ENCODE measurements at regions of chr7 and their contacts with region 1.

Region 1: DNA sequence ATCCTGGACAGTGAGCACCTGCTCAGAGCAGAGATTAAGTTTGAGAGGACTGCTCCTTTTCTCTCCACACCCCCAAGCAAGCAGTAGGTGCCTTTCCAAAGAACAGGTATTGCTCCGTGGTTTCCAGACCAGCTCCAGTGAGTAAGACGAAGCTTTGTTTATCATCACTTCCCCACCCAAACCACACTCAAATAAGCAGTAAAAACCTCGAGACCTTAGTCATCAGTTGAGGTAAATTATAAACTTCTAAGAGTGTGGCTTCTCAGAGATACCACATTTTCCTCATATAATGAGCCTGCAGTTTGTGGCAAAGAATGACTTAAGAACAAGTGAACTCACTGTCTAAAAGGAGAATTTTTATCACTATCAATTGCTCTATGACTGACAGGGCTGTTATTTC is 50.0 kb upstream of the GRB10 start:
- DNase-seq: peak; percentile 44
- H3K4me3 Mint-ChIP-seq: no peak overlapping the region
- H3K27ac Mint-ChIP-seq: peak overlapping the region; percentile 8
- H3K4me1 Mint-ChIP-seq: peaks cover 42% of the 10 kb centered on the region
- H3K27me3 Mint-ChIP-seq: peaks cover 34% of the 10 kb centered on the region

Region 2: GRCh38 chr7:50805447-50806119 is 27.2 kb before region 1 on chr7:
- intact Hi-C with region 1: loop called (anchors 1 kb)
- DNase-seq: no peak
- H3K4me3 Mint-ChIP-seq: no peak overlapping the region
- H3K27ac Mint-ChIP-seq: no peak overlapping the region
- H3K4me1 Mint-ChIP-seq: peaks cover 2% of the 10 kb centered on the region
- H3K27me3 Mint-ChIP-seq: peaks cover 22% of the 10 kb centered on the region

Region 3: DNA sequence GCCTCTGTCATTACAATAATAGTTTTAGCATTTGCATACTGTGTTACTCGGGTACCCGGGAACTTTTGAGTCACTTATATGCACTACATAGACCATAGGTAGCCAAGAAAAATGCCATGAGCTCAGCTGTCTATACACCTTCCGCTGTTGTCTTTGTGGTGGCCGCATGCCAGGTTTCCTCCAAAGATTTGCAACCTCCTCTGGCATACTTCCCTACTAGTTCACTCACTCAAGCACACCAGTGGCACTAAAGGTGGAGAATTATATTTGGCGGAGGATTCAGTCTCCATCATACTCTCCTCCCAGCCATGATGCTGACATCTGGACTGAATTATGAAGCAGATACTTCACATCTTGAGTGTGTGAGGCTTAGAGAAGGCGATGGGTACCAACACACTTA is 14.4 kb before region 1 on chr7:
- intact Hi-C with region 1: no loop called
- DNase-seq: no peak
- H3K4me3 Mint-ChIP-seq: no peak overlapping the region
- H3K27ac Mint-ChIP-seq: no peak overlapping the region
- H3K4me1 Mint-ChIP-seq: no peaks in the 10 kb centered on the region
- H3K27me3 Mint-ChIP-seq: peaks cover 33% of the 10 kb centered on the region

Region 4: DNA sequence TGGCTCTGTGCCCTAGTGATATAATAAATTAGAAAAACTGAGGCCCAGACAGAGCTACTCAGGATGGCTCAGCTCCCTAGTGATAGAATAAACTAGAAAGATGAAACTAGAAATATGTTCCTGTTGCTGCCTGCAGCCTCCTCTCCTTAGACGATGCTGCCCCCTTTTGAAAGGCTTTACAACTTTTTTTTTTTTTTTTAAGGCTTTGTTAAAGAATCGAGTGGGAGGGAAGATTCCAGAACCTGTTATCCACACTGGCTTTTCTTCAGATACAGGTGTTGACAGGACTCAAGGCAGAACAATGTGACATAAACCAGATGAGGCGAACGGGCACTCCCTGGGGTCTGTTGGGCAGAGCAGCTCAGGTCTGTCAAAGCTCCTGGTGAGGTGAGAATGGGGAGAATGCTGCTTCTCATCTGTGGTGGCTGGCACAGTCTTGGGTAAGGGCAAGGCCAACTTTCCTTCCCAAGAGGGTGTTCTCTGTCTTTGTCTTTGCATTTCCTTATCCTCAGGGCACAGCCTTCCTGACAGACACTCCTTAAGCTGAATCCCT is 308.8 kb after region 1 on chr7:
- intact Hi-C with region 1: loop called (anchors 5 kb)
- DNase-seq: no peak
- H3K4me3 Mint-ChIP-seq: no peak overlapping the region
- H3K27ac Mint-ChIP-seq: no peak overlapping the region
- H3K4me1 Mint-ChIP-seq: peaks cover 23% of the 10 kb centered on the region
- H3K27me3 Mint-ChIP-seq: peaks cover 11% of the 10 kb centered on the region

Region 5: DNA sequence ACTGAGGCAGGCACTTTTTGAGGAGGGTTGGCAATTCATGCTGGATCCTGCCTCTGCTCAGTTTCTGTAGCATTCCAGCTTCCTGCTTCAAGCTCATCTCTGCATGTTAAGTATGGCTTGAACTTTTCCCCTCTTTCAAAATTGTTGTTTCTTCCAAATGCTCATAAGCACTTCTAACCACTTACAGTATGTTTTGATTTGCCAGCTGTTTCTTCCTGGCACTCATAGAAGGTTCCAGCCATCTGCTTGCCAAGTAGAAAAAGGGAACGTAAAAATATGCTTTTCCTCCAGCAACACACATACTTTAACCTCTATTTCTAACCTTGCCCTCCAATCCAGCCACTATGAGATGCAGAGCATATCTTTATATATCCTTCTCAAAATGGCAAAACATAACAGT is 1176.4 kb after region 1 on chr7:
- intact Hi-C with region 1: no loop called
- DNase-seq: no peak
- H3K4me3 Mint-ChIP-seq: no peak overlapping the region
- H3K27ac Mint-ChIP-seq: no peak overlapping the region
- H3K4me1 Mint-ChIP-seq: no peaks in the 10 kb centered on the region
- H3K27me3 Mint-ChIP-seq: no peaks in the 10 kb centered on the region